ENCODE measurements at regions of chr14 and their contacts with region 1.

Region 1: DNA sequence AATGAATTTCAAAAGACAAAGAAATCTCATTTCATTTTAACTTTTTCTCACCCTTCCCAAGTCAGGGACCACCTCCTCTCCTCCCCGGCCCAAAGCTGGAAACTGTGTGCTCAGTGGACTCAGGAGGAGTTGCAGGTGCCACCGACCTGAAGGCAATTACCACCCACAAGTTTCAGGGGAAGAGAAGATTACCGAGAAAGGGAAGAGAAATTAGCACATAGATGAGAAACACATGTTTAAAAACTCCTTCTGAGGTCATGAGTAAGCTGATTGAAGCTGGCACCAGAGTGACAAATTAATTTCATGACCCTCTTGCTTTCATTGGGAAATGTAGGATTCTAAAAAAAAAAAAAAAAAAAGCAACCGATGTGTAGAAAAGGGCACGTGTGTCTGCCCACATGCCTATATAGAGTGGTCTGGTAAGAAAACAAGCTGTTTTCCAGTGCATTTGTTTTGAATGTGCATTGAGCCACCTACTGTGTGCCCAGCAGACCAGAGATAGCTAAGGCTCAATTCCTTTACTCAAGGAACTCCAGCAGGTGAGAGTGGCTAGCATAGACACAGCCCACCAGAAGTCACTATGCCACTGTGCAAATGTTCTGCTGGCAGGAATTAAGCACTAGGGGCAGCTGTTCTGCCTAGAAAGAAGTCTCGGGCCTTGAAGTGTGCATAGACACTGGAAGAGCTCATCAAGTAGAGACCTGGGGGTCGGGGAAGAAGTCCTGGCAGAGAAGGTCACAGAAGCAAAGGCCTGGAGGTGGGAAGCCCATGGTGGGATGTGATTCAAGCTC is 30.5 kb downstream of the DPF3 start:
- DNase-seq: no peak
- H3K4me3 ChIP-seq: no peak overlapping the region
- H3K27ac ChIP-seq: no peak overlapping the region
- H3K4me1 ChIP-seq: no peaks in the 10 kb centered on the region
- H3K27me3 ChIP-seq: no peaks in the 10 kb centered on the region
- CTCF ChIP-seq: no peak
- POLR2A ChIP-seq: no peak

Region 2: GRCh38 chr14:72049455-72049854 is 814.0 kb before region 1 on chr14:
- intact Hi-C with region 1: loop called (anchors 5 kb)
- DNase-seq: no peak
- H3K4me3 ChIP-seq: no peak overlapping the region
- H3K27ac ChIP-seq: no peak overlapping the region
- H3K4me1 ChIP-seq: no peaks in the 10 kb centered on the region
- H3K27me3 ChIP-seq: no peaks in the 10 kb centered on the region
- CTCF ChIP-seq: no peak
- POLR2A ChIP-seq: no peak

Region 3: DNA sequence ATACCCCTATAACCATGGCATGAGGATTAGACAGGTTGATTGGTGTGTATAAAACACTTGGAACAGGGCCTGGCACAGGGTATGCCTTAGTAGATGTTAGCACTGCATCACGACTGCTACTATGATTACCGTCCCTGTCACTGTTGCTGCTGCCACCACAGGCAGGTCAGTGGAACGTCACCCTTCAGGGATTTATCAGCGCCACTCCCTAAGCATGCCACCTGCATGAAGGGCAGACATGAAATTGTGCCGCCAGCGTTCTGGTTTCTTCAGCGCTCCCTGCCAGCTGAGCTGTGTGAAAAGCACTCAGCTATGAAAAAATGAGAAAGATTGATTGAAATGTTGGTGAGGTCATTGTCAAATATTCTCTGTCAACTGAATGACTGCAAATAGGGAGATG is 446.5 kb before region 1 on chr14:
- intact Hi-C with region 1: loop called (anchors 5 kb)
- DNase-seq: no peak
- H3K4me3 ChIP-seq: no peak overlapping the region
- H3K27ac ChIP-seq: peak overlapping the region in 1 of 2 donors; percentile 43
- H3K4me1 ChIP-seq: no peaks in the 10 kb centered on the region
- H3K27me3 ChIP-seq: no peaks in the 10 kb centered on the region
- CTCF ChIP-seq: peak in 2 of 3 donors; percentile 21 to 31
- POLR2A ChIP-seq: no peak

Measured in breast epithelium (tissue), 4 donors.